Activated B cell treated with CpG ODN at 0.5 μM for 24 hours (primary cell): ENCODE measurements at regions of chr12 and their contacts with region 1.

Region 1: DNA sequence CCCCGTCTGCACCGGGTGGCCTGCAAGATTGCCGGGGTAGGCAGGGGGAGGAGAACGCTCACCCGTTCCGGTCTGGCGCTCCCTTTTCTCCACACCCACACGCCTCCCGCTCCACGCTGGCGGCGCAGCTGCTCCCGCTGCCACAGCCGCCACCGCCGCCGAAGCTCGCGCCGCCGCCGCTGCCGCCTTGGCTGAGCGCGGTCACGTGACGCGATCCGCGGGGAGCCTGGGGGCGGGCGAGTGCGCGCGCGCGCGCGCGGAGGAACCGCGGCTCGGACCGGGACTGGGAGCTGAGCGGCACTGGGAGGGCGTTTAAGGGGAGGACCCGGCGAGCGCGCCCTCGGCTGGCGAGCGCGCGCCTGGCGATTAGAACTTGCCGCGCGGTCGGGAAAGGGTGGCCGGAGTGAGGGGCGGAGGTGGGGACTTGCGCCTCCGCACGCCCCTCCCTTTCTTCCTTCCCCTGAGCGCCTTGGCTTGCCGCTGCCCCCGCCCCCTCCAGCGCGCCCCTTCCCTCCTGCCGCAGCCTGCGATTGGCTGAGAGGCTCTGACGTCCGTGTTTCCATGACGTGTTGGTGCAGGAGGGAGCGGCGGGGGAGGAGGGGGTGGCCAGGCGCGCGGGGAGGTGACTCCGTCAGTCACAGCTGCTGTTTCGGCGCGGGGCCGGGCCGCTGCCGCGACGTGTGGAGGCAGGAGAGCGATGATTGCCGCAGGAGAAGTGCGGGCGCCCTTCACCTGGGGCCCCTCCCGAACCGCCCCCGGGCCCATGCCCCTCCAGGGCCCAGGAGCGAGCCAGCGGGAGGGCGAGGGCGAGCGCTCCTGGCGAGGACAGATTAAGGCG is 738 bp upstream of the ATP2B1 start:
- DNase-seq: peak; percentile 97
- ATAC-seq: peak; percentile 75
- H3K4me3 Mint-ChIP-seq: peak overlapping the region; percentile 91
- H3K27ac Mint-ChIP-seq: peak overlapping the region; percentile 94
- H3K4me1 Mint-ChIP-seq: peaks cover 40% of the 10 kb centered on the region
- H3K27me3 Mint-ChIP-seq: no peaks in the 10 kb centered on the region
- CTCF ChIP-seq: no peak

Region 2: GRCh38 chr12:89352492-89353187 is 356.7 kb before region 1 on chr12 and contains the start of gene DUSP6:
- CTCF ChIA-PET with region 1: no interaction called
- POLR2A ChIA-PET with region 1: no interaction called
- intact Hi-C with region 1: loop called (anchors 5 kb)
- DNase-seq: peak; percentile 62
- ATAC-seq: peak; percentile 61
- H3K4me3 Mint-ChIP-seq: peak within 1 kb of the TSS; percentile 84
- H3K27ac Mint-ChIP-seq: peak within 1 kb of the TSS; percentile 82
- H3K4me1 Mint-ChIP-seq: peaks cover 62% of the 10 kb centered on the region
- H3K27me3 Mint-ChIP-seq: no peaks in the 10 kb centered on the region
- CTCF ChIP-seq: no peak
- total RNA-seq, gene DUSP6: 1.6 and 1.8 TPM in 2 replicates

Region 3: DNA sequence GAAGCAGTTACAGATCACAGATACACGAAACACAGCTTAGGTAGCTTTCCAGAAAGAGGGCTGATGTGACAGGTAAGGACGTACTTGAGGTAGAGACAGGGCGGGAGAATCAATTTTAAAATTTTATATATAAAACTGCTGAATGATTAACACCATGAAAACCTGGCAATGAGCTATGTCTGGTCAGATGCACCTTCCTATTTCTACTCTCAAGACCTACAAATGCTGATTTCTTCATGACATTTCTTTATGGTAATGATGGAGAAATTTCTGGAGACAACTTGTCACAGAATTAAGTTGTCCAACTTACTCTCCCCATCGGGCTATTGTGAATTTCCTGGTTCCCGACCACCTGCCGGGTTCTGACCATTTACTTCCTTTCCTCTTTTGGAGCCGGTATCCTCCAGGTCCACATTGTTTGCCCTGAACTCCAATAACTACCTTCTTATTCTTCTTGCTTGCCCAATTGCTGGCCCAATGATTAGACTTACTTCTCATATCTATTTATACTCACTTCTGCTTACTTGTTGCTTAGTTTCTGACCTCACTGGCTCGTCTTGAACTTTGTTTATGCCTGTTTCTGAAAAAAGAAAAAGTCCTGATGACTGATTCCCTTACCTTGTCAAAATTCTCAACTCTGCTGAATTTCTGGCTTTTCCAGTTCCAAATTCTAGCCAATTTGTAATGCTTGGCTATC is 12.1 kb after region 1 on chr12:
- CTCF ChIA-PET with region 1: interaction called, 3 read pairs
- POLR2A ChIA-PET with region 1: interaction called, 39 read pairs
- intact Hi-C with region 1: loop called (anchors 1 kb)
- DNase-seq: no peak
- ATAC-seq: peak; percentile 86
- H3K4me3 Mint-ChIP-seq: peak overlapping the region; percentile 72
- H3K27ac Mint-ChIP-seq: peak overlapping the region; percentile 95
- H3K4me1 Mint-ChIP-seq: peaks cover 39% of the 10 kb centered on the region
- H3K27me3 Mint-ChIP-seq: no peaks in the 10 kb centered on the region
- CTCF ChIP-seq: no peak

Region 4: DNA sequence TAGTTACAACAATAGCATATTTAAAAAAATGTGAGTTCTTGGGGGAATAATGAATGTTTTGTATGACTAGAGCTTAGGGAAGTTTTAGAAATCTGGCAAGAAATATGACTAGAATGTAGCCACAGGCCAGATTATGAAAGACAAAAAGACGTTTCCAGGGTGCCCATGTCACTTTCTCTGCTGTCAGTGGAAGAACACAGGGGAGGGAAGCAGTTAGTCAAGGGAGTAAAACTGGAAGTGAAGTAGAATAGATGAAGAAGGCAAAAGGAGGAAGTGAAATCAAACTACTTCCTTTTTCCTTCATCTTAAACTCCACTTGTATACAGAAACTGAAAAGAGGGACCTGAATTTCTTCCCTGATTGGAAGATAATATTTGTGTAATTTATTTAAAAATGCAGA is 80.5 kb after region 1 on chr12:
- CTCF ChIA-PET with region 1: no interaction called
- POLR2A ChIA-PET with region 1: interaction called, 5 read pairs
- intact Hi-C with region 1: loop called (anchors 2 kb)
- DNase-seq: no peak
- ATAC-seq: peak; percentile 97
- H3K4me3 Mint-ChIP-seq: peak overlapping the region; percentile 67
- H3K27ac Mint-ChIP-seq: peak overlapping the region; percentile 87
- H3K4me1 Mint-ChIP-seq: peaks cover 20% of the 10 kb centered on the region
- H3K27me3 Mint-ChIP-seq: no peaks in the 10 kb centered on the region
- CTCF ChIP-seq: no peak

Region 5: GRCh38 chr12:89927226-89927698 is 217.9 kb after region 1 on chr12:
- CTCF ChIA-PET with region 1: interaction called, 7 read pairs
- POLR2A ChIA-PET with region 1: interaction called, 115 read pairs
- intact Hi-C with region 1: loop called (anchors 1 kb)
- DNase-seq: no peak
- ATAC-seq: peak; percentile 90
- H3K4me3 Mint-ChIP-seq: peak overlapping the region; percentile 89
- H3K27ac Mint-ChIP-seq: peak overlapping the region; percentile 98
- H3K4me1 Mint-ChIP-seq: peaks cover 69% of the 10 kb centered on the region
- H3K27me3 Mint-ChIP-seq: no peaks in the 10 kb centered on the region
- CTCF ChIP-seq: no peak

Region 6: GRCh38 chr12:89999699-90000505 is 290.5 kb after region 1 on chr12:
- CTCF ChIA-PET with region 1: no interaction called
- POLR2A ChIA-PET with region 1: interaction called, 12 read pairs
- intact Hi-C with region 1: no loop called
- DNase-seq: no peak
- ATAC-seq: no peak
- H3K4me3 Mint-ChIP-seq: no peak overlapping the region
- H3K27ac Mint-ChIP-seq: no peak overlapping the region
- H3K4me1 Mint-ChIP-seq: peaks cover 22% of the 10 kb centered on the region
- H3K27me3 Mint-ChIP-seq: no peaks in the 10 kb centered on the region
- CTCF ChIP-seq: no peak